Heart right ventricle (tissue), 16 donors: ENCODE measurements at regions of chr1 and their contacts with region 1.

Region 1: GRCh38 chr1:184563308-184563707 is 176.5 kb downstream of the C1orf21 start:
- DNase-seq: no peak
- ATAC-seq: peak in 5 of 8 donors; percentile 56 to 66 (median 59)
- H3K4me3 ChIP-seq: no peak overlapping the region
- H3K27ac ChIP-seq: peak overlapping the region in 6 of 10 donors; percentile 37 to 74 (median 56)
- H3K4me1 ChIP-seq: peaks cover 8 to 38% (median 31%) of the 10 kb centered on the region in 9 donors
- H3K27me3 ChIP-seq: no peaks in the 10 kb centered on the region
- CTCF ChIP-seq: peak; percentile 23 to 78 (median 68)

Region 2: GRCh38 chr1:184082541-184083415 is 480.5 kb before region 1 on chr1:
- intact Hi-C with region 1: loop called in 8 of 10 experiments (anchors 2 to 10 kb)
- DNase-seq: no peak
- ATAC-seq: no peak
- H3K4me3 ChIP-seq: no peak overlapping the region
- H3K27ac ChIP-seq: no peak overlapping the region
- H3K4me1 ChIP-seq: peaks cover 0 to 16% (median 5%) of the 10 kb centered on the region in 9 donors
- H3K27me3 ChIP-seq: no peaks in the 10 kb centered on the region
- CTCF ChIP-seq: no peak

Region 3: GRCh38 chr1:184296466-184297243 is 266.7 kb before region 1 on chr1:
- intact Hi-C with region 1: loop called in 1 of 10 experiments (anchors 5 kb)
- DNase-seq: peak; percentile 75 to 97
- ATAC-seq: peak; percentile 91 to 95 (median 94)
- H3K4me3 ChIP-seq: peak overlapping the region in 5 of 10 donors; percentile 6 to 26 (median 18)
- H3K27ac ChIP-seq: peak overlapping the region; percentile 57 to 95 (median 82)
- H3K4me1 ChIP-seq: peaks cover 16 to 74% (median 41%) of the 10 kb centered on the region in 9 donors
- H3K27me3 ChIP-seq: no peaks in the 10 kb centered on the region
- CTCF ChIP-seq: no peak

Region 4: DNA sequence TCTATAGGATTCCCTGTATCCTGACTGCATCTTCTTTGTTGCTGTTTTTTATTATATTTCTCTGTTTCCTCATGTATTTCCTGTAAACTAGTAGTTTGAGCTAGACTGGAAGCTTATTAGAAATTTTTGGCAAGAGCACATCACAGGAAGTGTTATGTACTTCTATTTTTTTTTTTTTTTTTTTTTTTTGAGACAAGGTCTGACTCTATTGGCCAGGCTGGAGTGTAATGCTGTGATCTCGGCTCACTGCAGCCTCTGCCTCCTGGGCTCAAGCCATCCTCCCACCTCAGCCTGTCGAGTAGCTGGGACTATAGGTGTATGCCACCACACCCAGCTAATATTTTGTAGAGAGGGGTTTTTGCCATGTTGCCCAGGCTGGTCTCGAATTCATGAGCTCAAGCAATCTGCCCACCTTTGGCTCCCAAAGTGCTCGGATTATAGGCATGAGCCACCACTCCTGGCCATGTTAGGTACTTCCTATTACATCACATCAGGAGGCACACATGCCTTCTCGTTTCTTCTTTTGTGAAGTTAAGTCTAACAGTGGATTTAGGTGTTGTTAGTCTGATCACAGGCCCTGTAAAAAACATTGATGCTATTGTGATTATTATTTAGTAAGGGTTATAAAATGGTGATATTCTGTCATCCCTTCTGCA is 164.0 kb before region 1 on chr1:
- intact Hi-C with region 1: loop called in 1 of 10 experiments (anchors 10 kb)
- DNase-seq: no peak
- ATAC-seq: peak in 7 of 8 donors; percentile 39 to 72 (median 64)
- H3K4me3 ChIP-seq: no peak overlapping the region
- H3K27ac ChIP-seq: peak overlapping the region in 4 of 10 donors; percentile 0 to 39 (median 6)
- H3K4me1 ChIP-seq: peaks cover 0 to 77% (median 46%) of the 10 kb centered on the region in 9 donors
- H3K27me3 ChIP-seq: no peaks in the 10 kb centered on the region
- CTCF ChIP-seq: no peak

Region 5: GRCh38 chr1:184472136-184472535 is 91.2 kb before region 1 on chr1:
- intact Hi-C with region 1: loop called in 2 of 10 experiments (anchors 5 kb)
- DNase-seq: no peak
- ATAC-seq: peak in 6 of 8 donors; percentile 51 to 78 (median 64)
- H3K4me3 ChIP-seq: no peak overlapping the region
- H3K27ac ChIP-seq: peak overlapping the region in 9 of 10 donors; percentile 26 to 60 (median 41)
- H3K4me1 ChIP-seq: peaks cover 4 to 58% (median 33%) of the 10 kb centered on the region in 9 donors
- H3K27me3 ChIP-seq: no peaks in the 10 kb centered on the region
- CTCF ChIP-seq: peak in 3 of 9 donors; percentile 24 to 30 (median 28)

Region 6: DNA sequence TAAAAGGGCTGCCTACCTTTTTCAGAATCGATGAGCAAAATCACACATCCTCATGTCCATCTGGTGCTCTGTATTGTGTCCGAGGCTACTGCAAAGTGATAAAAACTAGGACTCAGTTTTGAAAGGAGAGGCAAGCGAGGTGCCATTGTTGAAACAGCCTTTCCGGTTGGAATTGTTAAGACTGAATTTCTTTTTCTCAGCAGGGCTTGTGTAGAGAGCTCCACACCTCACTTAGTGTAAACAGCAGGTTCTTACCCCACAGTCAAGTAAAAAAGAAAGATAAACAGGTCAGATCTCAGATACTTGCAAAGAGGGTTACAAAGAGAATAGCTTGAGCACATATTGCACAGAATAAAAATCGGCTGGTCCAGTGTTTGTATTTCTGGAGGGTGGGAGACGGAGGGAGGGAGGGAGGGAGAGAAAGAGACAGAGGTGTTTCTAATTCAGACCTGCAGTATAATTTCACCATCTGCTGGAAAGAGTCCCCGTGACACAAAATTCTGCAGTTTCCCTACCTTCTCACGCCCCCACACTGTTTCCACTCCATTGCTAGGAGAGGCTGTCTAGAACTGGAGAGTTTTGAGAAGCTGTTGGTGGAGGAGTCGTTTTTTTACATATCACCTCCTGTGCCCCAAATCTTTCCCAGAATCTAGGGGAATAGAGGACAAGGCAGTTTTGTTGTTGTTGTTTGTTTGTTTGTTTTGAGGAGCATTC is 108.9 kb after region 1 on chr1:
- intact Hi-C with region 1: loop called in 4 of 10 experiments (anchors 5 to 10 kb)
- DNase-seq: no peak
- ATAC-seq: no peak
- H3K4me3 ChIP-seq: no peak overlapping the region
- H3K27ac ChIP-seq: no peak overlapping the region
- H3K4me1 ChIP-seq: no peaks in the 10 kb centered on the region
- H3K27me3 ChIP-seq: no peaks in the 10 kb centered on the region
- CTCF ChIP-seq: no peak

Region 7: GRCh38 chr1:184771190-184771691 is 207.9 kb after region 1 on chr1:
- intact Hi-C with region 1: no loop called
- DNase-seq: no peak
- ATAC-seq: no peak
- H3K4me3 ChIP-seq: no peak overlapping the region
- H3K27ac ChIP-seq: no peak overlapping the region
- H3K4me1 ChIP-seq: no peaks in the 10 kb centered on the region
- H3K27me3 ChIP-seq: no peaks in the 10 kb centered on the region
- CTCF ChIP-seq: no peak